ENCODE measurements at regions of chr10 and their contacts with region 1.

Region 1: DNA sequence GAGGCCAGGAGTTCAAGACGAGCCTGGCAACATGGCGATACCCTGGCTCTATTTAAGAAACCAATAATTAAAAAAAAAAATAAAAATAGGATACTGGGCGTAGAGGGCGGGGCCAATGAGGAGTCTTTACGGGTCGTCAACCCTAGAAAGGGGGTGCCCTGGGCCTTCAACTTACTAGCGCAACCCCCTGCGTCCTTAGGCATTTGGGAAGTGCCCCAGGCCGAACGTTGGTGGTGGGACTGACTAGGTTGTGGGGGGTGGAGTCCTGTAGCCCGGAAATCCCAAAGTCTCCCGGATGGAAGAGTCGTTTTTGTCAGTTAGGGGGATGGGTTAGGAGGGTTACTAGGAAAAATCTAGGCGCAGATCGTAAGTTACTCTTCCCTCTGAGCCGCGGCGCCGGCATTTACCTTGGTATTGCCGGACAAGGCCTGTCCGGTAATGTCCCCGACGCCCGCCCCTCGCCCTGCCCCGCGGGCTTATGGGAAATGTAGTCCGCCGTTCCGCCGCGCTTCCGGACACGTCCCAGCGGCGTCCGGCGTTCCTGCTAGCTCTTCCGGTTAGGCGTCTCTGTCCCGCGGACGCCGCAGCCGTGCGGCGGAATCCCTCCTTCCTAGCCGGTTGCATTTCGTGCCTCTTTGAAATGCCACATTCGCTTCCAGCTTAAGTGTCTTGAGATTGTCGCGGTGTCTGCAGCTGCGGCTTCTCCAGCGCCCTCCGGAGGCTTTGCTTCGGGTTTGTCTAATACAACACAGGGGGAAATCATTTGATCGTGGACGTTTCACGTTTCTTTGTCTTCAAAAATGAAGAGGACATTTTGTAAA is 1.3 kb upstream of the ACBD5 start:
- DNase-seq: peak; percentile 82 to 97 (median 84)
- ATAC-seq: peak; percentile 84
- H3K4me3 ChIP-seq: peak overlapping the region; percentile 59
- H3K27ac ChIP-seq: peak overlapping the region; percentile 94
- H3K4me1 ChIP-seq: peaks cover 16 to 23% of the 10 kb centered on the region in 2 experiments; a peak in 4 of 5 replicates
- H3K27me3 ChIP-seq: no peaks in the 10 kb centered on the region
- CTCF ChIP-seq: peak; percentile 54 to 66 (median 59)
- EP300 ChIP-seq: no peak
- POLR2A ChIP-seq: peak; percentile 87
- RAD21 ChIP-seq: peak; percentile 5 to 43

Region 2: GRCh38 chr10:26911811-26912461 is 329.9 kb before region 1 on chr10:
- CTCF ChIA-PET with region 1: no interaction called
- POLR2A ChIA-PET with region 1: no interaction called
- in situ Hi-C with region 1: no loop called
- intact Hi-C with region 1: no loop called
- DNase-seq: no peak
- ATAC-seq: no peak
- H3K4me3 ChIP-seq: no peak overlapping the region
- H3K27ac ChIP-seq: no peak overlapping the region
- H3K4me1 ChIP-seq: no peaks in the 10 kb centered on the region
- H3K27me3 ChIP-seq: no peaks in the 10 kb centered on the region
- CTCF ChIP-seq: no peak
- EP300 ChIP-seq: no peak
- POLR2A ChIP-seq: no peak
- RAD21 ChIP-seq: no peak

Region 3: DNA sequence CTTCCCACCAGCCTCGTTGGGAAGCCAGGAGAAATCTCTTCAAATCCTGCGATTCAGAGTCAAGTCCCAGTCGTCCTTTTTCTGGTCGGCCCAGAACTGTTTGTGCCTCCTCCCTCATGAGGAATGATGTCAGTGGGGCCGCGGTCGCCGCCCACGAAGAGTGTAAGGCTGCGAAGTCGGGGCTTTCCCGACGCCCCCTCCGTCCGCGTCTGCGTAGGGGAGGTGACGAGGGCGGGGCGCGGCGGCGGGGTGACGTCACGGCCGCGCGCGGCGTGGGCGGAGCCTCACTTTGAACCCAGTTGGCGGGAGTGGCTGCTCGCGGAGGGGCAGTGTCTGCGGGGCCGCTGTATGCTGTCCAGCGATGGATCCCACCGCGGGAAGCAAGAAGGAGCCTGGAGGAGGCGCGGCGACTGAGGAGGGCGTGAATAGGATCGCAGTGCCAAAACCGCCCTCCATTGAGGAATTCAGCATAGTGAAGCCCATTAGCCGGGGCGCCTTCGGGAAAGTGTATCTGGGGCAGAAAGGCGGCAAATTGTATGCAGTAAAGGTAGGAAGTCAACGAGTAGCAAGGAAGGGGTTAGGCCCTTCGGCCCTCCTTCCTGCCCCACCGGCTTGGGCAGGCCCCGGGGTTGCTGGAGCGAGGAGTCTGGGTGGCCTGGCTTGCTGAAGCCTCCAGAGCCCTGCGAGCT is 86.7 kb before region 1 on chr10 and contains the start of gene MASTL:
- CTCF ChIA-PET with region 1: no interaction called
- POLR2A ChIA-PET with region 1: interaction called, 3 read pairs
- in situ Hi-C with region 1: no loop called
- intact Hi-C with region 1: loop called (anchors 2 kb)
- DNase-seq: peak; percentile 92 to 96 (median 94)
- ATAC-seq: peak; percentile 90
- H3K4me3 ChIP-seq: peak within 1 kb of the TSS; percentile 70
- H3K27ac ChIP-seq: peak within 1 kb of the TSS; percentile 98
- H3K4me1 ChIP-seq: peaks cover 7 to 16% of the 10 kb centered on the region in 2 experiments; a peak in 4 of 5 replicates
- H3K27me3 ChIP-seq: no peaks in the 10 kb centered on the region
- CTCF ChIP-seq: no peak
- EP300 ChIP-seq: no peak
- POLR2A ChIP-seq: peak; percentile 88
- RAD21 ChIP-seq: no peak
- polyA plus RNA-seq, gene MASTL: 6.8 to 8.0 TPM

Region 4: GRCh38 chr10:27252267-27253000 is 10.6 kb after region 1 on chr10:
- CTCF ChIA-PET with region 1: no interaction called
- POLR2A ChIA-PET with region 1: interaction called, 12 read pairs
- in situ Hi-C with region 1: no loop called
- intact Hi-C with region 1: no loop called
- DNase-seq: peak; percentile 77 to 85 (median 82)
- ATAC-seq: peak; percentile 99
- H3K4me3 ChIP-seq: peak overlapping the region; percentile 56
- H3K27ac ChIP-seq: peak overlapping the region; percentile 85
- H3K4me1 ChIP-seq: peaks cover 7 to 8% of the 10 kb centered on the region in 2 experiments; a peak in 4 of 5 replicates
- H3K27me3 ChIP-seq: no peaks in the 10 kb centered on the region
- CTCF ChIP-seq: peak; percentile 30 to 46 (median 33); a peak in 4 of 6 replicates
- EP300 ChIP-seq: no peak
- POLR2A ChIP-seq: peak; percentile 86
- RAD21 ChIP-seq: no peak

Region 5: GRCh38 chr10:27525819-27526218 is 284.0 kb after region 1 on chr10:
- CTCF ChIA-PET with region 1: no interaction called
- POLR2A ChIA-PET with region 1: no interaction called
- in situ Hi-C with region 1: no loop called
- intact Hi-C with region 1: loop called (anchors 10 kb)
- DNase-seq: peak in 2 of 4 experiments; percentile 31 to 50
- ATAC-seq: peak; percentile 44
- H3K4me3 ChIP-seq: no peak overlapping the region
- H3K27ac ChIP-seq: peak overlapping the region; percentile 91; the same call in 2 of the 3 replicates
- H3K4me1 ChIP-seq: peaks cover 0 to 36% of the 10 kb centered on the region in 2 experiments; a peak in 4 of 5 replicates
- H3K27me3 ChIP-seq: no peaks in the 10 kb centered on the region
- CTCF ChIP-seq: no peak
- EP300 ChIP-seq: no peak
- POLR2A ChIP-seq: no peak
- RAD21 ChIP-seq: no peak

Measured in K562 (cell line).